Stomach (tissue), 19 donors: ENCODE measurements at regions of chr19 and their contacts with region 1.

Region 1: DNA sequence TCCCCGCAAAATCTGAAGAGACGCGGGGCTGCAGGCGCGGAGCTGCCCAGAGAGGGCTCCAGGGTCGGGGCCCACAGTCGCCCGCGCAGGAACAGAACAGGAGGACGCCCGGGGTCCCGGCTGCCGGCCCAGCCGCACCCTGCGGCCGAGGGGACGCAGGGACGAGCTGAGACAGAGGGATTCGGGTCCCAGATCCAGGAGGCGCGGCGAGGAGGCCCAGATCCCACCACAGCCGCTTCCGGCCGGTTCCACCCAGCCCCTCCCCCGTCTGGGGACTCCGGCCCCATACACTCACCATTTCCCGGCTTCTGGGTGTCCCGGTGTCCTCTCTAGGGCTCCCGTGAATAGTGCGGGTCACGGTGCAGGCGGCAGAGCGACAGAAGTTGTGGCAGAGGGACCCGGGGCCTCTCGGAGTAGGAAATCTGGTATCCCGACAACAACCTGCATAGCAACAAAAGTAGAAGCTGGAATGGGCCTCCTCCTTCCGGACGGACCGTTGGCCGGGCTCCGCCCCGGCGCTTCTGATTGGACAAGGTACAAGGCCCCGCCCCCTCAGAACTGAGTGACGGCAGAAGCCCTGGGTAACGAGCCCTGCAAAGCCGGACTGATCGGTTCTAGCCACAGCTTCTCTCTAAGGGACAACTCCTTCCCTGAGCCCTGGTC is at the start of gene ZNF20:
- DNase-seq: peak; percentile 98
- H3K4me3 ChIP-seq: peak within 1 kb of the TSS; percentile 85 to 94 (median 88)
- H3K27ac ChIP-seq: peak within 1 kb of the TSS; percentile 74 to 90 (median 80)
- H3K4me1 ChIP-seq: peaks cover 11 to 27% (median 24%) of the 10 kb centered on the region in 4 donors
- H3K27me3 ChIP-seq: no peaks in the 10 kb centered on the region
- CTCF ChIP-seq: no peak
- EP300 ChIP-seq: no peak
- POLR2A ChIP-seq: peak in 1 of 4 donors; percentile 17
- total RNA-seq, gene ZNF20: 1.3 to 5.0 (median 2.2) TPM in 4 of 5 donors, not detected in the other

Region 2: GRCh38 chr19:12000152-12000981 is 139.6 kb before region 1 on chr19:
- intact Hi-C with region 1: no loop called
- DNase-seq: no peak
- H3K4me3 ChIP-seq: no peak overlapping the region
- H3K27ac ChIP-seq: no peak overlapping the region
- H3K4me1 ChIP-seq: no peaks in the 10 kb centered on the region
- H3K27me3 ChIP-seq: no peaks in the 10 kb centered on the region
- CTCF ChIP-seq: no peak
- EP300 ChIP-seq: no peak
- POLR2A ChIP-seq: no peak

Region 3: DNA sequence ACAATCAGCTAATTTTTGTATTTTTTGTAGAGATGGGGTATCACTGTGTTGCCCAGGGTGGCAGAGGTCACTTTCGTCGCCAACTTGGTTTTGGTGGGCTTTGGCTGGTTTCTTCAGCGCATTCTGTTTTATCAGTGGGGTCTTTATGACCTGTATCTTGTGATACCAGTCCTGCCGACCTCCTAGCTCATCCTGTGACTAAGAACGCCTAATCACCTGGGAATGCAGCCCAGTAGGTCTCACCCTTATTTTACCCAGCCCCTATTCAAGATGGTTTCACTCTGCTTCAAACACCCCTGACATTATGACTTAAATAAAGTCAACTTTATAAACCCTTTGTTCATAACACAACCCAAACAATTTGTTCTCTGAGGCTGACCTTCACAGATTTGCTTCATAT is 84.2 kb before region 1 on chr19:
- intact Hi-C with region 1: loop called (anchors 5 kb)
- DNase-seq: no peak
- H3K4me3 ChIP-seq: no peak overlapping the region
- H3K27ac ChIP-seq: no peak overlapping the region
- H3K4me1 ChIP-seq: peaks cover 8 to 25% (median 18%) of the 10 kb centered on the region in 4 donors
- H3K27me3 ChIP-seq: peaks cover 0 to 3% (median 0%) of the 10 kb centered on the region in 3 donors
- CTCF ChIP-seq: no peak
- EP300 ChIP-seq: no peak
- POLR2A ChIP-seq: no peak

Region 4: DNA sequence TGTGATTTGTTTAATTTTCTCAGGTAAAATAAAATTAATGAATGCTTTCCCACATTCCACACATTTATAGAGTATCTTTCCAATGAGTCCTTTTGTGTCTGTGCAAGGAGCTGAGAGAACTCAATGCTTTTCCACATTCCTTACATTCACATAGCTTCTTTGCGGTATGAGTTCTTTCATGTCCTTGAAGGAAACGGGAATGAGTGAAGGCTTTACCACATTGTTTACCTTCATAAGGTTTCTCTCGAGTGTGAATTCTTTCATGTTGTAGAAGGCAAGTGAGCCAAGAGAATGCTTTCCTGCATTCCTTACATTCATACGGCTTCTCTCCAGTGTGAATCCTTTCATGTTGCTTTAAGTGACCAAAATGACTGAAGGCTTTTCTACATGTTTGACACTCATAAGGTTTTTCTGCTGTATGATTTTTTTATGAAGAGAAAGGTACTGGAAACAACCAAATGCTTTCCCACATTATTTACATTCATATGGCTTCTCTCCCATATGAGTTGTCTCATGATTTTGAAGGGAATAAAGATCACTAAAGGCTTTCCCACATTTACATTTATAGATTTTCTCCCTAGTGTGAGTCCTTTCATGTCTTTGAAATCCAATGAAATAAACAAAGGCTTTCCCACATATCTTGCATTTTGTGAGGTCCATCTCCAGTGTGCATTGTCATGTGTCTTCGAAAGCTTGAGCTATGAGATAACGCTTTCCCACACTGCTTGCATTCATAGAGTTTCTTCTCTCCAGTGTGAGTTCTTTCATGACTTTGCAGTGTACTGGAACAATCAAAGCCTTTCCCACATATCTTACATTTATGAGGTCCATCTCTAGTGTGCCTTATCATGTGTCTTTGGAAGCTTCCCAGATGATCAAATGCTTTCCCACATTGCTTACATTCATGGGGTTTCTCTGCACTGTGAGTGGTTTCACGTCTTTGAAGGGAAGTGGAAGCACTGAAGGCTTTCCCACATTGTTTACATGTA is 240.0 kb after region 1 on chr19:
- intact Hi-C with region 1: no loop called
- DNase-seq: no peak
- H3K4me3 ChIP-seq: no peak overlapping the region
- H3K27ac ChIP-seq: no peak overlapping the region
- H3K4me1 ChIP-seq: no peaks in the 10 kb centered on the region
- H3K27me3 ChIP-seq: no peaks in the 10 kb centered on the region
- CTCF ChIP-seq: no peak
- EP300 ChIP-seq: no peak
- POLR2A ChIP-seq: no peak